Heart right ventricle (tissue), 16 donors: ENCODE measurements at regions of chr4 and their contacts with region 1.

Region 1: DNA sequence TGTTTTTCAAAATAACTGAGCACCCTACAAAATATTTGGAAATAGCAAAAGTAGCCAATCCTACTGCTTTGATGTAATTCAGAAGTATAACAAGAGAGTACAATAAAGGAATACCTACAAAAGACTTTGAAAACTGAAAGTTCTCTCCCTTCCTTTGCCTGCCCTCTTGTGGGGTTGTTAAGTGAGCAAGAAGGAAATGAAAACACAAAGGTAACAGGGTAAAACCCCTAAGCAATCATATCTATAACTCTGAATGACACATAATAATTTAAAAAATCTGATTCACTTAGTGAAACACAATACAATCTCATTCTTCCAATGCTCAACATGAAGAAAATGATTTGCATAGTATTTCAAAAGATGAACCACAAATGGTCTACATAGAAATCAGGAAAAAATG is 98.2 kb downstream of the FRYL start:
- DNase-seq: no peak
- ATAC-seq: peak in 4 of 8 donors; percentile 44 to 70 (median 58)
- H3K4me3 ChIP-seq: no peak overlapping the region
- H3K27ac ChIP-seq: peak overlapping the region in 1 of 10 donors; percentile 19
- H3K4me1 ChIP-seq: peaks cover 0 to 45% (median 17%) of the 10 kb centered on the region in 9 donors
- H3K27me3 ChIP-seq: no peaks in the 10 kb centered on the region
- CTCF ChIP-seq: peak; percentile 25 to 74 (median 47)

Region 2: GRCh38 chr4:48370260-48371134 is 311.4 kb before region 1 on chr4:
- intact Hi-C with region 1: no loop called
- DNase-seq: no peak
- ATAC-seq: no peak
- H3K4me3 ChIP-seq: no peak overlapping the region
- H3K27ac ChIP-seq: no peak overlapping the region
- H3K4me1 ChIP-seq: peaks cover 0 to 37% (median 11%) of the 10 kb centered on the region in 9 donors
- H3K27me3 ChIP-seq: no peaks in the 10 kb centered on the region
- CTCF ChIP-seq: no peak

Region 3: DNA sequence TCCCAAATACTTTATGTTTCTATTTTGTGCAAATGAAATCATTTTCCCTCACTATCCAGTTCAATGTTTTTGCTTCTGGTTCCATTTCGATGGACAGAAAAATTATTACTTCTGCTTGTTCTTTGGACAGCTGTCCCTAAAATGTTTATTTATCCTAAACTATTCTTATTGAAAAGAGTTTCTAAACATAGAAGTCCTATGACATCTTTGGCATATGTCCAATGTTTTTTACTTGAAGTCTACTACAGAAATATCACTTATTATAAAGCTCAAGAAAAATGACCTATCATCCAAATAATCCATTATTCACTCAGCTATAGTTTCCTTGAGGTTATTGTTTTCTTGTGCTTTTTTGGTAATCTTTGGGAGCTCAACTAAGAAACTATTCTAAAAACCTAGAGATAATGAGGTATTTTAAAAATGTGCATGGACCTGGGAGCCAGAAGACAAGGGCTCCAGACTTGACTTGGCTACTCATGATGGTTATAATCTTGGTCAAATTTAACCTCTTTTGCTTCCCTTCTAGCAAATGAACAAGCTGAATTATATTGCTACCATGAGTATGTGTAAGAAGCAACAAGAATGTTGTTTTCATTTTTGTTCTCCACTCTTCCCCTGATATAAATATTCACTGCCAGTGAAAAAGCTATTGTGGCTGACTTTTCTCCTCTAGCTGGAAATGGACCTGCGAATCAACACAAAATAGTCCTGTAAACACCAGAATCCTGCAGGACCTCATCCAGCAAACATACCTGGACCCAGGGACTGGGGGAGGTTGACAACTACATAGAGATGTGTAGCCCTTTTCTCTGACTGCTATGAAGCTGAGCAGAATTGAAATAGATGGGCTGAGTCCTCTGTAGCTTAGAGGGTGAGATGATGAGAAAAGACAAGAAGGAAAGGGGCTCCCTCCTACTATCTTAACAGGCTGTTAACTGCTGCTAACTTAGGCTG is 39.2 kb before region 1 on chr4:
- intact Hi-C with region 1: loop called in 1 of 10 experiments (anchors 1 kb)
- DNase-seq: no peak
- ATAC-seq: peak in 1 of 8 donors; percentile 23
- H3K4me3 ChIP-seq: no peak overlapping the region
- H3K27ac ChIP-seq: peak overlapping the region in 7 of 10 donors; percentile 2 to 57 (median 31)
- H3K4me1 ChIP-seq: peaks cover 3 to 63% (median 39%) of the 10 kb centered on the region in 9 donors
- H3K27me3 ChIP-seq: no peaks in the 10 kb centered on the region
- CTCF ChIP-seq: no peak

Region 4: DNA sequence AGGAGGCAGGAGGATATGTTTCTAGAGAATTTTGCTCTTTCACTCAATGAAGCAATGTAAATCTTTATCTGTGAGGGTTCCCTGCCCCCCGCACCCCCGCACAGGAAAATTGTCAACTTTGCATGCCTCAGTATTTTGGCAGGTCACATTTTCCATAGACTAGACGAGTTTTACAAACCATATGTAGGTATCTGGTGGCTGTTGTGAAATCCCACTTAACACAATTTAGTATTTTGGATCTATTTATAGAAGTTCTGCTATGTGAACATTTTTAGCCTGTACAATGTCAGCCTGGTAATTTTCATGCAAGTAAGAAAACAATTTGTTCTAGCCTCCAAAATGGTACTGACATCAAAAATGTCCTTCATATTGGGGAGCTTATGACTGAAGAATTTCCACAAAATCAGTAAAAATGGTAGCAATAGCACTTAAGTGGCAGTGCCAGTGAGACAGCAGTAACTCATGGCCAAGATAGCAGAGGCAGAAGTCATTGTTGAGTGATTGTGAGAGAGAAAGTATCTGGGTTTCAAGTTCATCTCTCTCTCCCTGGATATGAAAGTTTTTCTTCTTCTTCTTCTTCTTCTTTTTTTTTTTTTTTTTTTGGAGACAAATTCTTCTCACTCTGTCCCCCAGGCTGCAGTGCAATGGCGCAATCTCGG is 110.6 kb after region 1 on chr4:
- intact Hi-C with region 1: no loop called
- DNase-seq: no peak
- ATAC-seq: peak in 3 of 8 donors; percentile 30 to 68 (median 42)
- H3K4me3 ChIP-seq: no peak overlapping the region
- H3K27ac ChIP-seq: no peak overlapping the region
- H3K4me1 ChIP-seq: peaks cover 0 to 11% (median 0%) of the 10 kb centered on the region in 9 donors
- H3K27me3 ChIP-seq: no peaks in the 10 kb centered on the region
- CTCF ChIP-seq: no peak